SK-N-SH (cell line): ENCODE measurements at regions of chr9 and their contacts with region 1.

Region 1: GRCh38 chr9:83622939-83623678 is at the start of gene IDNK:
- DNase-seq: peak; percentile 89
- H3K4me3 ChIP-seq: peak within 1 kb of the TSS; percentile 69 to 80
- H3K27ac ChIP-seq: peak within 1 kb of the TSS; percentile 55 to 93
- H3K4me1 ChIP-seq: peaks cover 0 to 16% of the 10 kb centered on the region in 2 experiments; a peak in 2 of 4 replicates
- H3K27me3 ChIP-seq: no peaks in the 10 kb centered on the region
- CTCF ChIP-seq: no peak
- EP300 ChIP-seq: no peak
- RAD21 ChIP-seq: 0 out of 2 replicates have a peak, but pooled peaks have one; percentile 3
- polyA plus RNA-seq, gene IDNK: 4.2 and 4.9 TPM in 2 replicates

Region 2: GRCh38 chr9:83636813-83637212 is 13.7 kb after region 1 on chr9:
- CTCF ChIA-PET with region 1: interaction called, 10 read pairs
- POLR2A ChIA-PET with region 1: interaction called, 5 read pairs
- DNase-seq: no peak
- H3K4me3 ChIP-seq: no peak overlapping the region
- H3K27ac ChIP-seq: no peak overlapping the region
- H3K4me1 ChIP-seq: no peaks in the 10 kb centered on the region
- H3K27me3 ChIP-seq: no peaks in the 10 kb centered on the region
- CTCF ChIP-seq: no peak
- EP300 ChIP-seq: no peak
- RAD21 ChIP-seq: no peak